Natural killer cell (primary cell): ENCODE measurements at regions of chr13 and their contacts with region 1.

Region 1: DNA sequence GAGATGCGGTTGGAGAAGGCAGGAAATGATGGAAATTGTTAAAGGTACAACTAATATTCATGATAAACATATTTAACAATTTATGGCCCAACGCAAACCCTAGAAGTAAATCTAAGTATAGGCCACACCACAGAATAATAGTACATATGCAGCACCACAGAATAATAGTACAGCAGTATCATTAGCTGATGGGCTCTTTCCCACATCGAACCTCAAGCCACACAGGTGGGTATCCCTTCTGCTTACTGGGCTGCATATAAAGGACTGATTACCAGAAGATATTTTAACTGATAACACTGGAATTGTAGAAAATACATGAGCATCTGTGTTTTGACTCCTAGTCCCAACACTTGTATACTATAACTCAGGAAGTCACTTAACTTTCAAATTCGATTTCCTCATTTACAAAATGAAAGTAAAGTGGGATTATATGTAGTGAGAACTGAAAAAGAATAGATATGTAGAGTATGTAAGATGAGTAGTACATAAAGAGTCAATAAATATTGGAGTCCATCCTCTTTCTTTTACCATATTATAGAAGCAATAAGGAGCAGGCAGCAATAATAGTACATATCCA is 91.5 kb downstream of the TSC22D1 start:
- DNase-seq: peak in 1 of 2 donors; percentile 20
- ATAC-seq: peak in 1 of 3 donors; percentile 47
- H3K4me3 ChIP-seq: no peak overlapping the region
- H3K4me3 Mint-ChIP-seq: peak overlapping the region; percentile 63
- H3K27ac ChIP-seq: no peak overlapping the region
- H3K27ac Mint-ChIP-seq: peak overlapping the region; percentile 61 to 78
- H3K4me1 ChIP-seq: no peaks in the 10 kb centered on the region
- H3K4me1 Mint-ChIP-seq: peaks cover 13 to 15% of the 10 kb centered on the region in 2 donors
- H3K27me3 ChIP-seq: no peaks in the 10 kb centered on the region
- H3K27me3 Mint-ChIP-seq: no peaks in the 10 kb centered on the region
- CTCF ChIP-seq: no peak

Region 2: GRCh38 chr13:44537248-44537647 is 52.6 kb after region 1 on chr13:
- intact Hi-C with region 1: no loop called
- DNase-seq: peak in 1 of 2 donors; percentile 17
- ATAC-seq: no peak
- H3K4me3 ChIP-seq: no peak overlapping the region
- H3K4me3 Mint-ChIP-seq: no peak overlapping the region
- H3K27ac ChIP-seq: no peak overlapping the region
- H3K27ac Mint-ChIP-seq: no peak overlapping the region
- H3K4me1 ChIP-seq: no peaks in the 10 kb centered on the region
- H3K4me1 Mint-ChIP-seq: no peaks in the 10 kb centered on the region
- H3K27me3 ChIP-seq: no peaks in the 10 kb centered on the region
- H3K27me3 Mint-ChIP-seq: no peaks in the 10 kb centered on the region
- CTCF ChIP-seq: no peak

Region 3: DNA sequence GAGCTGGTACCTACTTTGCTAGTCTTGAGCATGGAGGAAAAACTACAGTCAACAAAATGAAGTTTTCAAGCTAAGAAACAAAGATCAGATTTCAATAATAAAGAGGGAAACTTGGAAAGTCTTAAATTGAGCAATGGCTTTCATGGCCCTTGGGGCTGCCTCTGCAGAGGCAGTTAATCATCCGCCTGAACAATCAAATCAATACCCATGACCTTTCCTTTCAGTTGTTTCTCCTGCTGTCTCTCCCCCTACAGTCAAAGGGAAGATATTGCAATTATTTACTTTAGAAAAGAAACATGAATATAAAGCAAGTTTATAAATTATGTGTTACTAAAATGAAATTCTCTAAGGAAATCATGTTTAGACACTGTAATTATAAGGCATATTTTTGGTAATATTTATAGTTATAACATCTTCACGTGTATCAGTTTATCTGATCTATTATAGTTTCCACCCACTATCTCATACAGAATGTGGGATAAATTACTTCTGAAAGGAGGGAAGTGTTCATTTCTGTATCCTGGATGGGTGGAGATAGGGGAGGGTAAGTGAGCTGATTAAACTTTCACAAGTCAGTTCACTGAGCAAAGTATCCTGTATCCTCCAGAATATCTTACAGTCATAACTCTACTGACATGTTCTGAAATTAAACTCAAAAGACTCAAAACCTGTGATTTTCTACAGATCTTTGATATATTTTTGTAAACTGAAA is 163.9 kb after region 1 on chr13:
- intact Hi-C with region 1: loop called (anchors 2 kb)
- DNase-seq: peak in 1 of 2 donors; percentile 7
- ATAC-seq: no peak
- H3K4me3 ChIP-seq: no peak overlapping the region
- H3K4me3 Mint-ChIP-seq: no peak overlapping the region
- H3K27ac ChIP-seq: no peak overlapping the region
- H3K27ac Mint-ChIP-seq: no peak overlapping the region
- H3K4me1 ChIP-seq: no peaks in the 10 kb centered on the region
- H3K4me1 Mint-ChIP-seq: peaks cover 5 to 17% of the 10 kb centered on the region in 2 donors
- H3K27me3 ChIP-seq: no peaks in the 10 kb centered on the region
- H3K27me3 Mint-ChIP-seq: peaks cover 0 to 7% of the 10 kb centered on the region in 2 donors
- CTCF ChIP-seq: peak; percentile 14

Region 4: GRCh38 chr13:44879463-44880058 is 394.9 kb after region 1 on chr13:
- intact Hi-C with region 1: loop called (anchors 5 kb)
- DNase-seq: peak in 1 of 2 donors; percentile 35
- ATAC-seq: no peak
- H3K4me3 ChIP-seq: no peak overlapping the region
- H3K4me3 Mint-ChIP-seq: no peak overlapping the region
- H3K27ac ChIP-seq: no peak overlapping the region
- H3K27ac Mint-ChIP-seq: no peak overlapping the region
- H3K4me1 ChIP-seq: no peaks in the 10 kb centered on the region
- H3K4me1 Mint-ChIP-seq: no peaks in the 10 kb centered on the region
- H3K27me3 ChIP-seq: no peaks in the 10 kb centered on the region
- H3K27me3 Mint-ChIP-seq: peaks cover 9 to 12% of the 10 kb centered on the region in 2 donors
- CTCF ChIP-seq: no peak

Region 5: DNA sequence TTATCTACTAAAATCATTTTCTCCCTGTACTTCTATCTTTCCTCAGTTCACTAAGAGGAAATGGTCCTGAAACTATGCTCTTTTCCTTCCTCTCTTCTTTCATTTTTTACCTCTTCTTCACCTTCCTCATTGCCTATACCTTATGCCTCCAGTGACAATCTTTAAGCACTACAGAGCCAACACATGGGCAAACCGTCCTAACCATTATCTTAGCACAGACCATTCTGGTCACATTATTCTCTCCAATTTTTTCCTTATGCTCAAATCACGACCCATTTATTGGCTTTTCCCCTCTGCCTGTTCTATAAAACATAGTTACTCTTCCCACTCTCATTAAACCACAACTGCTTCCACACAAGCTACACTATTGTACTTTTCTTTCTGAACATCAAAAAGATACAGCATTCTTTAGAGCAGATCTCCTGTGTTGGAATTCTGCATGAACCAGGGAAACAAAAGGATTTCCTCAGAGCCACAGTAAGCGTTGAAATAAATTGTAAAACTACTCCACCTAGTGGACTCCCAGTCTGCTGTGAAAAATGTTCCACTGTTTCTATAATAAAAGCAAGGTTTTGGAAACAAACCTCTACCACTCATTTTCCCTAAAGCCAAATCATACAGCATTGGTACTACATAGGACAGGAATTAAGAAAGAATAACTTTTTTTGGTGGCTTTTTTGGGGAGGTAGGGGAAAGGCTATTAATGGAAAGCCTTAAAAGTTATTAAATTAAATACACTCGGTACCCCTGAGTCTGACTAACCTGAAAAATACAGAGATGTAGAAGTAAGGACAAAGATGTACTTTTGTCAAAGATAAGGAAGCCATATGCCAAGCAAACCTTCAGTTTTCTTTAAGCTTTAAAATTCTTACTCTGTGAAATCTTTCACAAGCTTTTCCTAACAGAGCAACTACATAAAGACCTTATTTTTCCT is 485.2 kb after region 1 on chr13:
- intact Hi-C with region 1: loop called (anchors 1 kb)
- DNase-seq: peak in 1 of 2 donors; percentile 52
- ATAC-seq: peak in 1 of 3 donors; percentile 34
- H3K4me3 ChIP-seq: no peak overlapping the region
- H3K4me3 Mint-ChIP-seq: no peak overlapping the region
- H3K27ac ChIP-seq: no peak overlapping the region
- H3K27ac Mint-ChIP-seq: no peak overlapping the region
- H3K4me1 ChIP-seq: no peaks in the 10 kb centered on the region
- H3K4me1 Mint-ChIP-seq: no peaks in the 10 kb centered on the region
- H3K27me3 ChIP-seq: no peaks in the 10 kb centered on the region
- H3K27me3 Mint-ChIP-seq: no peaks in the 10 kb centered on the region
- CTCF ChIP-seq: peak; percentile 77